AG04450 (cell line): ENCODE measurements at regions of chr14 and their contacts with region 1.

Region 1: DNA sequence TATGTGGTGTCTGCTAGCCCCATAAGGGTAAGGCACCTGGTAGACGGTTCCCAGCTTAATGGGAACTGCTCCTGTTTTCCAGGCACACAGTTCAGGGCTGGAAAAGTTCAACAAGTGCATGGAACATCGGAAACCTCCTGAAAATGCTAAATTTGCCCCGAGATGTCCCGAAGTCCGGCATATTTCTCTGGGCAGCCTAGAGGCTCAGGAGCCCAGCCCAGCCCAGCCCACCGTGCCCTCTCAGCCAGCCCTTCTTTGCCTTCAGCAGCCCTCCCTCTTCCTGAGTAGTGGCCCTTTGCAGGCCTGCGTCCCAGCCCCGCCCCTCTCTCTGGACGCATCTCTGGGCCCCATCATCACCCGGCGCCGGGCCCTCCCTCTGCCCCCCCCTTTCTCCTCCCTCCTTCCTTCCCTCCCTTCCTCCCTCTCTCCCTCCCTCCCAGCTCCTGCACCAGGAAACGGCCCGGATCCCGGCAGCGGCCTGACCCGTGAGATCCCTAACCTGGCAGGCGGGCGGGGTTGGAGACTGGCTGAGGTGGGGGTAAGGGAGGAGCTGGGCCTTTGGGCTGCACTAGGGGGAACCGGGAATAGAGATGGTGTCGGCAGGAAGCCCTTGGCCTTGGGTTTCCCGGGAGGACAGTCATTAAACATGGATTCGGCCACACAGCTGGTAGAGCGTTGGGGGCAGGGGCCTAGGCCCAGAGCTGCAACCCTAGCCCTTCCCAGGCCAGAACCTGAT is at the start of gene BCL2L2:
- DNase-seq: peak; percentile 70
- H3K4me3 ChIP-seq: peak within 1 kb of the TSS; percentile 92
- H3K27ac ChIP-seq: peak within 1 kb of the TSS; percentile 47
- H3K27me3 ChIP-seq: no peaks in the 10 kb centered on the region
- CTCF ChIP-seq: no peak
- polyA plus RNA-seq, gene BCL2L2: 21.5 and 22.2 TPM in 2 replicates

Region 2: DNA sequence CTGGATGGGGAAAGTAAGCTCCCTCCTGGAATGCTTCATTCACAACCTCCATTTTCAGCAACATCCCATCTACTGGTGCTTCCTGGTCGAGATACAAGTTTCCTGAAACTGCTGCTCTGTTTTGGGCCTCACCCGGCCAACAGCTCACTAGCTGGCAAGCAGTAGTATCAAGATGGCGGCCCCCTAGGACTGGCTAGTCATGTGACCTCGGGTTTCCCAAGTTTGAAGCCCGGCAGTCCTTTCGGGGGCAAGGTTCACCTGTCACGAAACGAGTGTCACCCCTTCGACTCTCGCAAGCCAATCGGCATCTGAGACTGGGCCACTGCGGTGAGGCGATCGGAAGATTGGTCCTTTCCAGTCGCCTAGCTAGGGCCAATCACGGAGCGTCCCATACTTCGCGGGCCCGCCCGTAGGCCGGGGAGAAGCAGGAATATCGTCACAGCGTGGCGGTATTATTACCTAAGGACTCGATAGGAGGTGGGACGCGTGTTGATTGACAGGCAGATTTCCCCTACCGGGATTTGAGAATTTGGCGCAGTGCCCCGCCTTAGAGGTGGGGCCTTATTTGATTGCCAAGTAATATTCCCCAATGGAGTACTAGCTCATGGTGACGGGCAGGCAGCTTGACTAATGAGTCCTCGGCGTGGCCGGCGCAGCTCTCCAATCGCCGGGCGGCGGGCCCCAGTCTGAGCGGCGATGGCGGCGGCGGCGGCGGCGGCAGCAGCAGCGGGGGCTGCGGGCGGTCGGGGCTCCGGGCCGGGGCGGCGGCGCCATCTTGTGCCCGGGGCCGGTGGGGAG is 14.4 kb after region 1 on chr14 and contains the start of gene PABPN1:
- CTCF ChIA-PET with region 1: interaction called, 3 read pairs
- POLR2A ChIA-PET with region 1: interaction called, 54 read pairs
- DNase-seq: peak; percentile 99
- H3K4me3 ChIP-seq: peak within 1 kb of the TSS; percentile 78
- H3K27ac ChIP-seq: peak within 1 kb of the TSS; percentile 93
- H3K27me3 ChIP-seq: no peaks in the 10 kb centered on the region
- CTCF ChIP-seq: no peak
- polyA plus RNA-seq, gene PABPN1: 174 and 182 TPM in 2 replicates

Region 3: GRCh38 chr14:23366426-23366921 is 59.9 kb after region 1 on chr14:
- CTCF ChIA-PET with region 1: no interaction called
- POLR2A ChIA-PET with region 1: no interaction called
- DNase-seq: peak; percentile 24
- H3K4me3 ChIP-seq: peak overlapping the region; percentile 69
- H3K27ac ChIP-seq: peak overlapping the region; percentile 68
- H3K27me3 ChIP-seq: peaks cover 16% of the 10 kb centered on the region
- CTCF ChIP-seq: no peak